A673 (cell line): ENCODE measurements at regions of chr10 and their contacts with region 1.

Region 1: DNA sequence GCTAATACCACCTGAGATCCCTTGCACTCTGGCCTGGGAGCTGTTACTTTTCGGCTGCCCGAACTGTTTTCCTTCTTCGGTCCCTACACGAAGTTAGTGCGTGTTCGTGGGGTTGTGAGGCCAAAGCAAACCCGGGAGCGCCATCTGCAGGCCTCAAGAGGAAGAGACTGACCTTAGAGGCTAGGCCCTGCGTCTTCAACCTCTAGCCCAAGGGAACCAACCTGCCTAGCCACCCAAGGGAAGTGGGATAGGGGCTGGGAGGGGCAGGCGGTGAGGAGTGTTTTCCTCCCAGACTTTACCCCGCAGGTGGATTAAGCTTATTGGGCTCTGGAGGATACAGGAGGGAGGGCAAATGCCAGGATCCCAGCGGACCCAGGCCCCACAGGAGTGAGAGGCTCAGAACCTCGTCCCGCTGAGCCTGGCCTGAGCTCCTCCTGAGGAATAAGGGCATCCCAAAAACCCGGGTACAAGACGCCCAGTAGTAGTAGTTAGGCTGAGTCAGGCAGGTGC is 1.7 kb upstream of the PAX2 start:
- DNase-seq: peak; percentile 78
- H3K4me3 ChIP-seq: peak overlapping the region; percentile 36
- H3K27ac ChIP-seq: no peak overlapping the region
- H3K4me1 ChIP-seq: peaks cover 26% of the 10 kb centered on the region
- H3K27me3 ChIP-seq: peaks cover 100% of the 10 kb centered on the region
- CTCF ChIP-seq: peak; percentile 89

Region 2: GRCh38 chr10:100562008-100562711 is 181.5 kb before region 1 on chr10:
- CTCF ChIA-PET with region 1: interaction called, 8 read pairs
- POLR2A ChIA-PET with region 1: no interaction called
- intact Hi-C with region 1: loop called (anchors 1 kb)
- DNase-seq: peak; percentile 89
- H3K4me3 ChIP-seq: peak overlapping the region; percentile 15
- H3K27ac ChIP-seq: no peak overlapping the region
- H3K4me1 ChIP-seq: peaks cover 10% of the 10 kb centered on the region
- H3K27me3 ChIP-seq: peaks cover 15% of the 10 kb centered on the region
- CTCF ChIP-seq: peak; percentile 99

Region 3: DNA sequence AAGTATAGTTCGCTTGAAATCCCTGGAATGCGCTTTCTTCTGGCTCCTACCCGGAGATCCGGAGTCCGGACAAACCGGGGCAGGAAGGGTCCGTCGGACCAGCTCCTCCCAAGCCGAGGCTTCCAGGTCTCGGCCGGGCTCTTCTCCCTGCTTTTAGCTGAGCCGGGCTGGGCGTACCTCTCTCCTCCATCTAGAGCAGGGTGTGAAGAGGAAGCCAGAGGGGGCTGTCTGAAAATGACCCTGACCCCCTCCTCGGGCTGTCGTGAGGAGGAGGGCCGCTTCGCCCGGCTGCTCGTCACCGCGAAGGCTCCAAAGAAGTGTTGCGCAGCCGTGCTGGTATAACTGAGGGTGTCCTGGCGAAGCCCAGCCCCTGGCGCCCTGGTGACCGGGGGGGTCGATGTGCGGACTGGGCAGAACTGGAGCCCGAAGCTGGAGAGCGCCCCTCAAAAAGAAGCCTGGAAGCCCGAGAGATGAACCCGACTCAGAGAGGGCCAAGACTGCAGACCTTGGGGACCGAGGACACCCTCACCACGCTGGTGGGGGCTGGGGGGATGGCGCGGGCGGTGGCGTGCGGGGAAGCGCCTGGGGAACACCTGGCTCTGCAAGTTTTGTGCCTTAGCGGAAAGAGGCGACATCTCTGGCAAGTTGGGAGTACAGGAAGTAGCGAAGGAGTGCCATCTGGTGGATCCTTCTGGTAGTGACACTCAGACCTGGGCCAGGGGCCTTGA is 323.8 kb after region 1 on chr10:
- CTCF ChIA-PET with region 1: interaction called, 10 read pairs
- POLR2A ChIA-PET with region 1: no interaction called
- intact Hi-C with region 1: no loop called
- DNase-seq: peak; percentile 91
- H3K4me3 ChIP-seq: peak overlapping the region; percentile 58
- H3K27ac ChIP-seq: peak overlapping the region; percentile 73
- H3K4me1 ChIP-seq: peaks cover 42% of the 10 kb centered on the region
- H3K27me3 ChIP-seq: no peaks in the 10 kb centered on the region
- CTCF ChIP-seq: peak; percentile 81